ENCODE measurements at regions of chr3 and their contacts with region 1.

Region 1: GRCh38 chr3:40432793-40433192 is 24.3 kb upstream of the RPL14 start:
- DNase-seq: no peak
- H3K4me3 ChIP-seq: no peak overlapping the region
- H3K4me3 Mint-ChIP-seq: no peak overlapping the region
- H3K27ac Mint-ChIP-seq: no peak overlapping the region
- H3K4me1 ChIP-seq: no peaks in the 10 kb centered on the region
- H3K4me1 Mint-ChIP-seq: no peaks in the 10 kb centered on the region
- H3K27me3 ChIP-seq: no peaks in the 10 kb centered on the region
- H3K27me3 Mint-ChIP-seq: peaks cover 11% of the 10 kb centered on the region
- CTCF ChIP-seq: peak in 1 of 2 experiments; percentile 25

Region 2: GRCh38 chr3:40329071-40329470 is 103.7 kb before region 1 on chr3:
- CTCF ChIA-PET with region 1: interaction called, 12 read pairs
- POLR2A ChIA-PET with region 1: interaction called, 4 read pairs
- intact Hi-C with region 1: loop called (anchors 1 kb)
- DNase-seq: peak in 1 of 2 experiments; percentile 6
- H3K4me3 ChIP-seq: no peak overlapping the region
- H3K4me3 Mint-ChIP-seq: no peak overlapping the region
- H3K27ac Mint-ChIP-seq: no peak overlapping the region
- H3K4me1 ChIP-seq: 0 out of 2 replicates have a peak, but pooled peaks cover 4% of the 10 kb centered on the region
- H3K4me1 Mint-ChIP-seq: no peaks in the 10 kb centered on the region
- H3K27me3 ChIP-seq: no peaks in the 10 kb centered on the region
- H3K27me3 Mint-ChIP-seq: no peaks in the 10 kb centered on the region
- CTCF ChIP-seq: no peak

Measured in Caco-2 (cell line).